ENCODE measurements at regions of chr2 and their contacts with region 1.

Region 1: GRCh38 chr2:160224060-160224459 is 24.0 kb upstream of the ITGB6 start:
- DNase-seq: peak; percentile 54
- H3K4me3 Mint-ChIP-seq: peak overlapping the region; percentile 45
- H3K27ac Mint-ChIP-seq: peak overlapping the region; percentile 73
- H3K4me1 Mint-ChIP-seq: peaks cover 64% of the 10 kb centered on the region
- H3K27me3 Mint-ChIP-seq: peaks cover 16% of the 10 kb centered on the region

Region 2: GRCh38 chr2:159879051-159879604 is 344.9 kb before region 1 on chr2:
- CTCF ChIA-PET with region 1: no interaction called
- POLR2A ChIA-PET with region 1: no interaction called
- intact Hi-C with region 1: loop called (anchors 5 kb)
- DNase-seq: peak; percentile 72
- H3K4me3 Mint-ChIP-seq: no peak overlapping the region
- H3K27ac Mint-ChIP-seq: peak overlapping the region; percentile 88
- H3K4me1 Mint-ChIP-seq: peaks cover 61% of the 10 kb centered on the region
- H3K27me3 Mint-ChIP-seq: no peaks in the 10 kb centered on the region

Region 3: GRCh38 chr2:160269803-160270570 is 45.9 kb after region 1 on chr2:
- CTCF ChIA-PET with region 1: interaction called, 4 read pairs
- POLR2A ChIA-PET with region 1: interaction called, 6 read pairs
- intact Hi-C with region 1: loop called (anchors 1 kb)
- DNase-seq: peak; percentile 81
- H3K4me3 Mint-ChIP-seq: peak overlapping the region; percentile 63
- H3K27ac Mint-ChIP-seq: peak overlapping the region; percentile 28
- H3K4me1 Mint-ChIP-seq: peaks cover 45% of the 10 kb centered on the region
- H3K27me3 Mint-ChIP-seq: peaks cover 5% of the 10 kb centered on the region

Region 4: GRCh38 chr2:160406591-160407392 is 182.7 kb after region 1 on chr2:
- CTCF ChIA-PET with region 1: interaction called, 3 read pairs
- POLR2A ChIA-PET with region 1: no interaction called
- intact Hi-C with region 1: loop called (anchors 2 kb)
- DNase-seq: peak; percentile 78
- H3K4me3 Mint-ChIP-seq: peak overlapping the region; percentile 82
- H3K27ac Mint-ChIP-seq: peak overlapping the region; percentile 94
- H3K4me1 Mint-ChIP-seq: peaks cover 80% of the 10 kb centered on the region
- H3K27me3 Mint-ChIP-seq: no peaks in the 10 kb centered on the region

Region 5: DNA sequence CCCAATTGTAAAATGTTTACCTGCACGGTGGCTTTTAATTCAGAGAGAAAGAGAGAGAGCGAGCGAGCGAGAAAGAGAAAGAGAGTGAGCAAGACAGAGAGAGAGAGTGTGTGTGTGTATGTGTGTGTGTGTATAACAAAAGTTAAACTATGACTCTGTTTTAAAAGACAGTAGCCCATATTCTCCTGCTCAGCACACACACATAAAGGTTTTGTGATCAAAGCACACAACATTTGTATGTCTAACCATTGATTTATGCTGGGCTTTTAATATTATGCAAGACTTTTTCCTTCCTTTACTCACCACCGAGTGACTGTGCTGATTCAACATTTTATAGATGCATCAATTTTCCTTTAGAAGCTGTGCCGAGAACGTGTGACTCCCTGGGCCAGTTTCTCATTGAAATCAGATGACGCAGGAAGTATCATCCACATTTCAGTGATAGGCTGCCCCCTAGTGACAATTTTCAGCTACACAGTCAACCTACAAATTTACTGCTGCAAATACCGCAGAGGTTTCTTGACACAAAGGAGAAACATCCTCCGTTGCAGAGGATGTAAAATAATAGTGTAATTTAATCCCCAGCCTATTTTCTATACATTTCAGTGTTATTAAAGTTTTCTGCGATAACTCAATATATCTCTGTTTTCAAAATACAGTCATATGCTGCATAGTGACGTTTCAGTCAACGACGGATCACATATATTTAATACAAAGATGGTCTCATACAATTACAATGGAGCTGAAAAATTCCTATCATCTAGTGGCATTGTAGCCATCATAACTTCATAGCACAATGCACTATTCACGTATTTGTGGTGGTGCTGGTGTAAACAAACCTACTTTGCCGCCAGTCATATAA is 770.3 kb after region 1 on chr2:
- CTCF ChIA-PET with region 1: no interaction called
- POLR2A ChIA-PET with region 1: no interaction called
- intact Hi-C with region 1: loop called (anchors 10 kb)
- DNase-seq: peak; percentile 71
- H3K4me3 Mint-ChIP-seq: no peak overlapping the region
- H3K27ac Mint-ChIP-seq: no peak overlapping the region
- H3K4me1 Mint-ChIP-seq: peaks cover 6% of the 10 kb centered on the region
- H3K27me3 Mint-ChIP-seq: no peaks in the 10 kb centered on the region

Region 6: DNA sequence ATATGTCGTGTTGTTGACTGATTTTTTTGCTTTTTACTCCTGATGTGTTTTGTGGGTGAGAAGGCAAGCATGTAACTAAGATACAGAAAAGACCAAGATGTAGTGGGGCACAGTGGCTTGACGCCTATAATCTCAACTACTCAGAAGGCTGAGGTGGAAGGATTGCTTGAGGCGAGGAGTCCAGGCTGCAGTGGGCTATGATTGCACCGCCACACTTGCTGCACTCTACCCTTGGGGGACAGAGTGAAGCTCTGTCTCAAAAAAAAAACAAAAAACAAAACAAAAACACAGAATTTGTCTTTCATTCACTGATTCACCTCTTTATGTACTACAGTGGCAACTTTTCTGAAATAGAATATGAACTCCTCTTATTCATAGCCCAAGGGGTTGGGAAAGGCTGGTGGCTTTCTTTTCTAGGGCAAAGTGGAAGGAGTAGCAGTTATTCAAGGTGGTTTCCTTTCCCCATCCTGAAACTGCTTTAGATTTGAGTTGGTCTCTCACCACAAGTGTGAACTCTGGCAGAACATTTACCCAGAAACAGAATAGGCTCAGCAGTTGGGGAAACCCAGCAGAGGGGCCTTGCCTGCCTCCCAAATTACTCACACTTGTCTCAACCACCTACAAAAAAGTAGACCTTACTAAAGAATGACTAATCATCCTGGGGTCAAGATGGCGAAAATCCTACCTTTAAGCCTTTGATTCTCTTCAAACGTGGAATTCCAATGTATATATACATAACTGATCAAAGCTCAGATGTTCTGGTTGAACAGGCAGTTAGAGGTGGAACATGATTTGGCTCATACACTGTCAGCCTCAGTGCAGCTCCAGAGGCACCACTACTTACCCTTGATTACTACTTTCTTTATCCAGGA is 942.7 kb after region 1 on chr2:
- CTCF ChIA-PET with region 1: no interaction called
- POLR2A ChIA-PET with region 1: no interaction called
- intact Hi-C with region 1: loop called (anchors 5 kb)
- DNase-seq: peak; percentile 87
- H3K4me3 Mint-ChIP-seq: peak overlapping the region; percentile 34
- H3K27ac Mint-ChIP-seq: peak overlapping the region; percentile 91
- H3K4me1 Mint-ChIP-seq: peaks cover 84% of the 10 kb centered on the region
- H3K27me3 Mint-ChIP-seq: no peaks in the 10 kb centered on the region